HEK293 (cell line): ENCODE measurements at regions of chr5 and their contacts with region 1.

Region 1: DNA sequence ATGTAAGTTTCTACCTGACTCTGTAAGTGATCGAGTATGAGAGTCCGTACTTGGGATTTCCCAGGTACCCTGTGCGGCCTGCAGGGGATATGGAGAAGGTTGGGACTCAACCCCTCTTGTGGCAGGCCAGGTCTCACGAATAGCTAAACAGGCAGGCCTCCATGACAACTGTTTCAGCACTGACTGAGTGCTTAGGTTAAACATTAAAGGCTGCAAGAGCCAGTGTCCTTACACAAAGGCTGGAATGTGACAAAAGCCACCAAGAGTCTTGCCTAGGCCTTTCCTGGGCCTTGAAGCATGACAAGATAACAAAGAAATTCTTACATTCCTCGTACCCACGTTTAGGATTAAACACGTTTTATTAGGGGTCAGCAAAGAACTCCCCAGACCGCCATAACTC is 58.6 kb downstream of the THBS4 start:
- H3K4me3 ChIP-seq: no peak overlapping the region
- H3K27ac ChIP-seq: peak overlapping the region; percentile 40; the same call in 1 of the 2 replicates
- H3K4me1 ChIP-seq: peaks cover 5% of the 10 kb centered on the region; the same call in 1 of the 2 replicates
- CTCF ChIP-seq: 0 out of 2 replicates have a peak, but pooled peaks have one; percentile 15

Region 2: DNA sequence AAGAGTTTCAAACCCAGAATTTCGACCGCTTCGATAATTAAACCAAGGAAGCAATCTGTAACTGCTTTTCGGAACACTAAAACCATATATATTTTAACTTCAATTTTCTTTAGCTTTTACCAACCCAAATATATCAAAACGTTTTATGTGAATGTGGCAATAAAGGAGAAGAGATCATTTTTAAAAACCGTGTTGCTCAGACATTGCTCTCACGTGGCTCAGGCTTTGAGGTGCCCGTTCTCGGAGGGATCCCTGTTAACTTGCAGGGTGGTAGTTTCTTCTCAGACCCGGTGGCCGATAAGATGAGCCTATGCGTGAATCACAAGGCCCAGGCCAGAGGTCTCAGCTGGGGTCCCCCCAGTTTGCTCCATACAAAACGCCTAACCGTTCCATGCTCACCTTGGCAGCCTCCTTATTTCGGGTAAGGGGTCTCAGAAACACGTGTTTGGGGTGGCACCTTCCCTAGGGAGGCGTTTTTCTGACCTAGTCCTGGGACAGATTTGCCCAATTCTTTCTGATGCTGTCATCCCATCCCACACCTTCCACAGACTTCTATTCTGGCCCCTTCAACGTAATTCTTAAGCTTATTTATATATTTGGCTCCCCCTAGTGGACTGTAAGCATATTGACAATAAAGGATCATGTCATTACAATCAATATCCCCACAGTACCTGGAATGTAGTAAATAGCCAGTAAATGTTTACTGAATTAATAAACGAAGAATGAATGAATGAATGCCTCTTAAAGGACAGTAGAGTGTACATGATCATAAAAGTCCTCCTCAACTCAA is 10.5 kb before region 1 on chr5:
- CTCF ChIA-PET with region 1: interaction called, 10 read pairs
- POLR2A ChIA-PET with region 1: no interaction called
- H3K4me3 ChIP-seq: no peak overlapping the region
- H3K27ac ChIP-seq: no peak overlapping the region
- H3K4me1 ChIP-seq: no peaks in the 10 kb centered on the region
- CTCF ChIP-seq: peak; percentile 42; the same call in 1 of the 2 replicates

Region 3: DNA sequence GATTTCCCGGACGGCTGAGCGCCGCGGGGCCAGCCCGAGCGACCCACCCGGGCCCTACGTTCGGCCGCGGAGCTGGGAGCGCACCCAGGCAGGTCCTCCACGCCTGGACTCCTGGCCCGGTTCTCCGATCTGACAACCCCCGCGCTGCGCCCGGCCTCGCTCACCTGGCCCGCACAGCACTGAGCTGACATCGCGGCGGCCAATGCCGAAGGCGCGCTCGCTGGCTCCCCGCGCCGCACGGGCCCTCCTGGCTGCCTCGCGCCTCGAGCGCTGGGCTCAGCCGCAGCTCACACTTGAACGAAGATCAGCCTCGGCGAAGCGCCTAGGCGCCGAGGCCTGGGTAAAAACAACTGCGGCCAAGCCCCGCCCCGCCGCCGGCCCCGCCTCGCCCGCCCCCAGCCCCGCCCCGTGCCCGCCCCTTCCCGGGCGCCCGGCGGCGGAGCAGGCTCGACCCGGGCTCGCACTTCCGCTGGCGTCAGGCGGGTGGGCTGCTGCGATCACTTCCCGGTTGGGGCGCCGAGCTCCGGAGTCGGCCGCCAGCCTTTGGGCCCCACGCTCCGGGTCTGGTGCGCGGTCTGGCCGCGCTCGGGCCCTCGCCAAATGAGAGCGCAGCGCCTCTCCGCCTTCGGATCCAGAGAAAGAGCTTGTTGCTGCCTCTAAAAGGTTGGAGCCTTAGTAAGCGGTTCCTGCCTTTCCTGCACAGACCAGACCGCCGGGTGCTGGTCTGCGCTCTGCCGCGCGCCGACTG is 162.1 kb after region 1 on chr5 and contains the start of gene SERINC5:
- CTCF ChIA-PET with region 1: interaction called, 11 read pairs
- POLR2A ChIA-PET with region 1: interaction called, 6 read pairs
- H3K4me3 ChIP-seq: peak within 1 kb of the TSS; percentile 53
- H3K27ac ChIP-seq: peak within 1 kb of the TSS; percentile 81
- H3K4me1 ChIP-seq: no peaks in the 10 kb centered on the region
- CTCF ChIP-seq: no peak

Region 4: DNA sequence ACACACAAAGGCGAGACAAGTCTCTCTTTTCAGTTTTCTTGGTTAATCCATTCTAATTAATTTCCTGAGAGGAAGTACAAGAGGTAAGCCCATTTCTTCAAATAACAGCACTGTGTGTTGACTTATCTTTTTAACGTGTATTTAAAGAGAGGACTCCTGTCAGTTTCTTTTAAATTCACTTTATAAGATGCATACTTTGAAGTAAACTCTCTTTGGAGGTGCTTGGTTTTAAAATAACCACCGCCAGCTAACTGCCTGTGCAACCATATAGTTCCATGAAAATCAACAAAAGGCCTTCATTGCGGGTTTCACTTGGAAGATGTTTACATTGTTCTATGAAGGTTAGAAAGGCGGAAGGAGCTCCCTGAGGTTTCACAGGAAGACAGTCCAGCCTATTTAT is 175.1 kb after region 1 on chr5:
- CTCF ChIA-PET with region 1: interaction called, 23 read pairs
- POLR2A ChIA-PET with region 1: no interaction called
- H3K4me3 ChIP-seq: no peak overlapping the region
- H3K27ac ChIP-seq: no peak overlapping the region
- H3K4me1 ChIP-seq: no peaks in the 10 kb centered on the region
- CTCF ChIP-seq: no peak

Region 5: GRCh38 chr5:80275347-80275746 is 181.6 kb after region 1 on chr5:
- CTCF ChIA-PET with region 1: interaction called, 23 read pairs
- POLR2A ChIA-PET with region 1: no interaction called
- H3K4me3 ChIP-seq: no peak overlapping the region
- H3K27ac ChIP-seq: no peak overlapping the region
- H3K4me1 ChIP-seq: no peaks in the 10 kb centered on the region
- CTCF ChIP-seq: peak; percentile 51; the same call in 1 of the 2 replicates

Region 6: GRCh38 chr5:80308526-80308925 is 214.7 kb after region 1 on chr5:
- CTCF ChIA-PET with region 1: interaction called, 121 read pairs
- POLR2A ChIA-PET with region 1: interaction called, 4 read pairs
- H3K4me3 ChIP-seq: no peak overlapping the region
- H3K27ac ChIP-seq: no peak overlapping the region
- H3K4me1 ChIP-seq: no peaks in the 10 kb centered on the region
- CTCF ChIP-seq: no peak

Region 7: GRCh38 chr5:80672140-80672736 is 578.4 kb after region 1 on chr5:
- CTCF ChIA-PET with region 1: interaction called, 10 read pairs
- POLR2A ChIA-PET with region 1: no interaction called
- H3K4me3 ChIP-seq: no peak overlapping the region
- H3K27ac ChIP-seq: no peak overlapping the region
- H3K4me1 ChIP-seq: no peaks in the 10 kb centered on the region
- CTCF ChIP-seq: peak; percentile 40; the same call in 1 of the 2 replicates